Posterior cingulate gyrus (tissue), 11 donors: ENCODE measurements at regions of chr19 and their contacts with region 1.

Region 1: DNA sequence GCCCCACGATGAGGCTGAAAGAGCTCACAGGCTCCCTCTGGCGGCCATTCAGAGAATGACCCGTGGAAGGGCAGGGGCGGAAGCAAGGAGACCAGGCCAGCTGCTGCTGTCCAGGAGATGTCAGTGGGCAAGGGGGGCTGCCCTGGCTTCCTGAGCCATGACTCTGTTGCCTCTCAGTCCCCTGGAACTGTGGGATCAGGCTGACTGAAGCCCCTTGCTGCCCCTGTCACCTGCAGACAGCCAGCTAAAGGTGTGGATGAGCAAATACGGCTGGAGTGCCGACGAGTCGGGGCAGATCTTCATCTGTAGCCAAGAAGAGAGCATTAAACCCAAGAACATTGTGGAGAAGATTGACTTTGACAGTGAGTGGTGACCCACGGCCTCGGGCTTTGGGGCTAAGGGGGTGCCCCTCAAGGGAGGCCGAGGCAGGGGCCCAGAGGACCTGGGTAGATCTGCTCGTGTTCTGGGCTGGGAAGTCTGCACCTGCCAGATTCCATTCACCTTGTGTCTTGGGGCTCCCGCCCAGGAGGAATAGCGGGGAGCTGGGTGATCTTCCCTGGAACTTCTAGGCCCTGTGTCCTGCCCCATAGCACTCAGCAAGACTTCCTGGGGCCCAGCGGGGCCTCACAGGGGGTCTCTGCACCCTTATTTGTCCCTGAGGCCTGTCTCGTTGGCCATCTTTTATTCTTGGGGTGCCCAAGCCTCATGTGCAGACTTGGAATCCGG is 12.5 kb upstream of the ACTN4 start:
- DNase-seq: peak; percentile 37 to 95 (median 79)

Region 2: DNA sequence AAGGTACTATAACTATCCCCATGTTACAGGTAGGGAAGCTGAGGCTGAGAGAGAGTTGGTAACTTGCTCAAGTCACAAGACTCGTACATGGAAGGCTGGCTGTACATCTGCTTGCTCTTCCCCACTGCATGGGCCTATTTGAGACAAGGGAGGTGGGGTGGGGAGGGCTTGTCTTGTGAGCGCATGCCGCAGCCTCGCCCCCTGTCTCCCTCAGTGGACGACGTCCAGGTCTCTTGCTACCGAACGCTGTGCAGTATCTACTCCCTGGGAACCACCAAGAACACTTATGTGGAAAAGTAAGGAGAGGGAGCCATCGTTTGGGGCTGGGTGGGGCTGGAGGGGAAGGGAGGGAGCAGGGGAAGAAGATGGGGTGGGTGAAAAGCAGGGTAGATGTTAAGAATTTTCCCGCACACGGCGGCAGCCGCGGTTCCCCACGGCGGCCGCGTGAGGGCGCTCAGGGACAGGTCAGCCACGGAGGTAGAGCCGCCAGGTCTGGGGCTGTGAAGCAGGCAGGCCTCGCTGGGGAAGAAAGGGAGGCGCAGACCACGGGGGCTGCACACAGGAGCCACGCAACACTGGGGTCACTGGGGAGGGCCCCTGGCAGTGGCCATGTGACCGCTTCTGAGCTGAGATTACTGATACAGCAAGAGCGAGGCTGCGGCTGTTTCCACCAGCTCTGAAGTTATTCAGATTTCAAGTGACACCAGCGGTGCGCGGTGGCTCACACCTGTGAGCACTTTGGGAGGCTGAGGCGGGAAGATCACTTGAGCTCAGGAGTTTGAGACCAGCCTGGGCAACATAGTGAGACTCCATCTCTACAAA is 119.9 kb before region 1 on chr19:
- intact Hi-C with region 1: loop called (anchors 10 kb)
- DNase-seq: peak; percentile 55 to 96 (median 72)

Region 3: GRCh38 chr19:38544034-38544958 is 90.6 kb before region 1 on chr19:
- intact Hi-C with region 1: loop called (anchors 5 kb)
- DNase-seq: peak; percentile 69 to 98 (median 84)